ENCODE measurements at regions of chr12 and their contacts with region 1.

Region 1: GRCh38 chr12:95286713-95287112 is 69.1 kb downstream of the VEZT start:
- DNase-seq: no peak
- ATAC-seq: no peak
- H3K4me3 Mint-ChIP-seq: no peak overlapping the region
- H3K27ac Mint-ChIP-seq: no peak overlapping the region
- H3K4me1 Mint-ChIP-seq: no peaks in the 10 kb centered on the region
- H3K27me3 Mint-ChIP-seq: no peaks in the 10 kb centered on the region
- CTCF ChIP-seq: no peak

Region 2: DNA sequence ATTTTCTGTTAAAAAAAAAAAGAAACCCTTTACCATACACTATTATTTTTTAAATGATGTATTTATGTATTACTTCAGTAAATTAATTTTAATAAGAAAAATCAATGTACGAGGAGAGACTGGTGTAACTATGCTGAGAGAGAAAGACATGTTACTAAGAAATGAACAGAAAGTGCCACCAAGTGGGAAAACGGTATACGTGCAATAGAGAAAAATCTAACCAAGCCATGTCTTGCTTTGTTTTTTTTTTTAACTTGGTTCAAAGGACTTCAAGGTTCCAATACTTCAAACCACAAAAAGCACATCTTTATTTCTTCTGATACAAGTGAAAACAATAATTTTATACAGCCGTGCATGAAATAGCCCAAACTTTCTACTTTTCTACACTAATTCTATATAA is 306.1 kb before region 1 on chr12:
- CTCF ChIA-PET with region 1: no interaction called
- POLR2A ChIA-PET with region 1: interaction called, 10 read pairs
- intact Hi-C with region 1: no loop called
- DNase-seq: no peak
- ATAC-seq: no peak
- H3K4me3 Mint-ChIP-seq: no peak overlapping the region
- H3K27ac Mint-ChIP-seq: no peak overlapping the region
- H3K4me1 Mint-ChIP-seq: peaks cover 5% of the 10 kb centered on the region
- H3K27me3 Mint-ChIP-seq: no peaks in the 10 kb centered on the region
- CTCF ChIP-seq: no peak

Region 3: GRCh38 chr12:95182868-95183415 is 103.8 kb before region 1 on chr12:
- CTCF ChIA-PET with region 1: no interaction called
- POLR2A ChIA-PET with region 1: no interaction called
- intact Hi-C with region 1: no loop called
- DNase-seq: no peak
- ATAC-seq: peak; percentile 31
- H3K4me3 Mint-ChIP-seq: no peak overlapping the region
- H3K27ac Mint-ChIP-seq: no peak overlapping the region
- H3K4me1 Mint-ChIP-seq: peaks cover 8% of the 10 kb centered on the region
- H3K27me3 Mint-ChIP-seq: no peaks in the 10 kb centered on the region
- CTCF ChIP-seq: no peak

Region 4: DNA sequence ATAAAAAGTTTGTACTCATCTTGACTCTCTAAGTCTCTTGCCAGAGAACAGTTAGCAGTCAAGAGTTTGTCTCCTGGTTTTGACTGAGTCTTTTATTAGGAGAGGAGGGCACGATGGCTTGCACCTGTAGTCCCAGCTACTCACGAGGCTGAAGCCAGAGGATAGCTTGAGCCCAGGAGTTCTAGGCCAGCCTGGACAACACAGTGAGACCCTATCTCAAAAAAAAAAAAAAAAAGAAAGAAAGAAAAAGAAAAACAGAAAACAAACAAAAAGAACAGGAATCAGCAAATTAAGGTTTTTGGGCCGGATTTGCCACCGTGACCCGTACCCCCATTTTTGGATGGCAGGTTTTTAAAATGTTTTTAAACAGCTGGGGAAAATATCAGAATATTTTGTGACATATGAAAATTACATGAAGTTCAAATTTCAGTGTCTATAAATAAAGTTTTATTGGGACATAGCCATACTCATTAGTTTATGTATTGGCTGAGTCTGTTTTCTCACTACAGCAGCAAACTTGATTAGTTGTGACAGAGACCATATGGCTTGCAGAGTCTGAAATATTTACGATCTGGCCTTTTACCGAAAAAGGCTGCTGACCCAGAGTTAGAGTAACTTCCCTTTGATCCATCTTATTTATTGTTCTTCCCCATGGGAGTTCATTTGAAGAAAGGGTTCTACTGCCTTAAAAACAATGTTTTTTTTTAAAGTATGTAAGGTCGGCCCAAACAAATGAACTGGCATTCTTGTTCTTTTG is 37.9 kb before region 1 on chr12:
- CTCF ChIA-PET with region 1: no interaction called
- POLR2A ChIA-PET with region 1: no interaction called
- intact Hi-C with region 1: no loop called
- DNase-seq: no peak
- ATAC-seq: no peak
- H3K4me3 Mint-ChIP-seq: no peak overlapping the region
- H3K27ac Mint-ChIP-seq: no peak overlapping the region
- H3K4me1 Mint-ChIP-seq: peaks cover 10% of the 10 kb centered on the region
- H3K27me3 Mint-ChIP-seq: no peaks in the 10 kb centered on the region
- CTCF ChIP-seq: no peak

Region 5: DNA sequence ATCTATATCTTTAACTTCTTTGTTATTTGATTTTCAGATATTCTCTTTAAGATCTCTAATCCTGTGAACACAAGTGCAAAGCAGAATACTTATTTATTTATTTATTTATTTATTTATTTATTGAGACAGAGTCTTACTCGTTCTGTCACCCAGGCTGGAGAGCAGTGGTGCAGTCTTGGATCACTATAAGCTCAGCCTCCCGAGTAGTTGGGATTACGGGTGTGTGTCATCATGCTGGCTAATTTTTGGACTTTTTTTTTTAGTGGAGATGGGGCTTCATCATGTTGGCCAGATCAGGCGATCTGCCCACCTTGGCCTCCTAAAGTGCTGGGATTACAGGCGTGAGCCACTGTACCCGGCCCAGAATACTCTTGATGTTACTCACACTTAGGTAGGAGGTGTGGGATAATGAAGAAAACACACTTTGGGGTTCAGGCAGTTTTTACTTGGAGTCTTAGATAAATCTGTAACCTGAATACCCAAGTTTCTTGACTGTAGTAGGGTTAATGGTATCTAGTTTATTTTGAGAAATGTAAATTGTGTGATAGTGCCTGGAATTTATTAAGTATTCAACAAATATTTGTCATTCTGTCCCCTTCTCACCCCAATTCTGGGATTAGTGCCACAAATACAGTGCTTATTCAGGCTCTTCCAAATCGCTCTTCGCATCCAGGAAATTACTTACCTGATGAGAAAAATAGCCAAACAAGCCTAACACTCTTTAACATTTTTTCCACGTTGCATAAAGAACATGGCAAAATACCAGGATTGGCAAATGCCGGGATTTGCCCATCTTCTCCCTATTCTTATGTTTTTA is 220.2 kb after region 1 on chr12:
- CTCF ChIA-PET with region 1: no interaction called
- POLR2A ChIA-PET with region 1: interaction called, 21 read pairs
- intact Hi-C with region 1: no loop called
- DNase-seq: no peak
- ATAC-seq: no peak
- H3K4me3 Mint-ChIP-seq: no peak overlapping the region
- H3K27ac Mint-ChIP-seq: no peak overlapping the region
- H3K4me1 Mint-ChIP-seq: peaks cover 2% of the 10 kb centered on the region
- H3K27me3 Mint-ChIP-seq: no peaks in the 10 kb centered on the region
- CTCF ChIP-seq: no peak

Region 6: GRCh38 chr12:95663525-95663924 is 376.8 kb after region 1 on chr12:
- CTCF ChIA-PET with region 1: no interaction called
- POLR2A ChIA-PET with region 1: no interaction called
- intact Hi-C with region 1: no loop called
- DNase-seq: no peak
- ATAC-seq: no peak
- H3K4me3 Mint-ChIP-seq: no peak overlapping the region
- H3K27ac Mint-ChIP-seq: no peak overlapping the region
- H3K4me1 Mint-ChIP-seq: no peaks in the 10 kb centered on the region
- H3K27me3 Mint-ChIP-seq: peaks cover 16% of the 10 kb centered on the region
- CTCF ChIP-seq: no peak

Measured in activated B cell treated with CpG ODN at 0.5 μM for 24 hours (primary cell).